Head of caudate nucleus (tissue), 42 donors: ENCODE measurements at regions of chr3 and their contacts with region 1.

Region 1: GRCh38 chr3:25782938-25783660 is at the start of gene NGLY1:
- DNase-seq: peak; percentile 55 to 94 (median 87)

Region 2: DNA sequence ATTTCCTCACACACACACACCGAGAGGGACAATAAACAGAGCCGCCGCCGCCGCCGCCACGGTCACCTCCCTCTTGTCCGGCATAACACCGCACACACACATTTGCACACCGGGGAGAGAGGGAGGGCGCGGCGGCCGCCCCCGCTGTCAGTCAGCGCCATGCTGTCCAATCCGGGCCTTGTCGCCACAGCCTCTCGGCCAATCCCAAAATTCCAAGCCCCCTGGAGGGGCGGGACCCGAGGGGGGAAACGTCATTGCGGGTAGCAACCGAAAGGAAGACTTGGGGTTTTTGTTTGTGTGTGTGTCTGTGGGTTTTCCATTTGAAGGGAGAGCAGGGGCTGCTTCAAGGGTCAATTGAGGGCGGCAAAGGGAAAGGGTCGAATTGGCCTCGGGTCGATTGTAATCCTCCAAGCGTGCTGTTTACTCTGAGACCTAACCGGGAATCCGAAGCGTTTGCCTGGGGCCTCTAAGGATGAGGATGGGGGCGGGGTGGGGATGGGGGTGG is 118.2 kb before region 1 on chr3 and contains the start of gene TOP2B:
- intact Hi-C with region 1: loop called (anchors 2 kb)
- DNase-seq: peak; percentile 94 to 99 (median 97)